ENCODE measurements at regions of chr17 and their contacts with region 1.

Region 1: DNA sequence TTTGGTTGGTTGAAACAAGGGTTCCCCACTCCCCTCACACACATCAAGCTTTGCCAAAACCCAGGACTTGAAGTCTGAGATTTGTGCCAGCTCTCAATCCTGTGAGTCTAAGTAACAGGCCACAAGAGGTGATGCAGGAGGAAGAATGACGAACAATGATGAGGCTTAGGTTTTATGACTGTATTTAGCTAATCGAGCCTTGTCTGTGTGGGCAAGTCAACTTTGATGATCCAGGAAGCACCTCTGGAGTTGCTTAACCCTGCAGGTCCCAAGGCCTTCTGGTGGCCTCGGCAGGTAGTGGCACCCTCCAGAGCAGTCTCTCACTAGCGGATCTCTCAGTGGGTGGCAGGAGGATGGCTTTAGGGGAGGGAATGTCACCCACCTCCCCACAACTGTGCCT is 28.7 kb downstream of the CDK5RAP3 start:
- DNase-seq: no peak
- H3K4me3 Mint-ChIP-seq: no peak overlapping the region
- H3K27ac Mint-ChIP-seq: no peak overlapping the region
- H3K4me1 Mint-ChIP-seq: peaks cover 10% of the 10 kb centered on the region
- H3K27me3 Mint-ChIP-seq: peaks cover 14% of the 10 kb centered on the region

Region 2: DNA sequence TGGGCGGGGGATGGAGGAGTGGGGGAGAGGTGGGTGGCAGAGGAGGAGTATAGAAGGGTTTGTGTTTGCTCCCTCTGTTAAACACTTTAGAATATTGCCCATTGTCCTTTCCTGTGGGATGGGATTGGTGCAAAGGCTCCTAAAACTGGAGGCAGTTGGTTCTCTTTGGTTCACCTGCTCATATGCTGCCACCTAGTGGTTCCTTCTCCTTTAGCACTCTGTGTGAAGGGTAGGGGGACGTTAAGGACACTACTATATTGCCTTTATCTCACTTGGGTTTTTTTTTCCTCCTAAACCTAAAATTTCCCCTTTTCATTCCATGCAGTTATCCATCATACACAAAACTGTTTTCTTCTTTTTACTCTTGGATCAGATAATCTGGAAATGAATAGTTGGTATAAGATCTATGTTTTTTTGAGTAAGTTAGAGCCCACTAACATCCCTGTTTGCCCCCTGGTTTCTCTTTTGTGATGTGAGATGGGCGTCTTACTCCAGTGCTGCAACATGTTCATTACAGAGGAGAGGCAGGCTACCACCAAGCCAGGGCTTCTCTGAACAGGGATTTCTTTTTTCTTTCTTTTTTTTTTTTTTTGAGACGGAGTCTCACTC is 131.7 kb after region 1 on chr17:
- CTCF ChIA-PET with region 1: no interaction called
- POLR2A ChIA-PET with region 1: no interaction called
- DNase-seq: peak; percentile 75
- H3K4me3 Mint-ChIP-seq: no peak overlapping the region
- H3K27ac Mint-ChIP-seq: peak overlapping the region; percentile 69
- H3K4me1 Mint-ChIP-seq: no peaks in the 10 kb centered on the region
- H3K27me3 Mint-ChIP-seq: no peaks in the 10 kb centered on the region

Region 3: GRCh38 chr17:48952904-48953303 is 953.3 kb after region 1 on chr17:
- CTCF ChIA-PET with region 1: no interaction called
- POLR2A ChIA-PET with region 1: interaction called, 15 read pairs
- DNase-seq: no peak
- H3K4me3 Mint-ChIP-seq: no peak overlapping the region
- H3K27ac Mint-ChIP-seq: no peak overlapping the region
- H3K4me1 Mint-ChIP-seq: no peaks in the 10 kb centered on the region
- H3K27me3 Mint-ChIP-seq: peaks cover 5% of the 10 kb centered on the region

Measured in activated CD4-positive, alpha-beta T cell treated with anti-CD3 and anti-CD28 coated beads, Interleukin-2, amount 10 ng/mL, durations not matched to agents 7 days and 5 days (primary cell).